Heart left ventricle (tissue), 16 donors: ENCODE measurements at regions of chr18 and their contacts with region 1.

Region 1: DNA sequence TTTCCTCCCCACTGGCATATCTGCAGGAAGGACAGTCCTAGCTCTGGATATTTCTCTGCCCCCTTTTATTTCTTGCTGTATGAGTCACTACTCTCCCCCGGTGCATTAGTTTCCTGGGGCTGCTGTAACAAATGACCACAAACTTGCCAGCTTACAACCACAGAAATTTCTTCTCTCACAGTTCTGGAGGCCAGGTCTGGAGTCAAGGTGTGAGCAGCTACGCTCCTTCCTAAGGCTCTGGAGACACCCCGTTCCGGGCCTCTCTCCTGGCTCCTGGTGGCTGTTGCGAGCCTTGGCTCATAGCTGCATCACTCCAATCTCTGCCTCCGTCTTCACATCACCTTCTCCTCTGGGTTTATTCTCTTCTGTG is 34.1 kb downstream of the PTPRM start:
- DNase-seq: no peak
- ATAC-seq: peak in 3 of 4 donors; percentile 17 to 49 (median 32)
- H3K4me3 ChIP-seq: no peak overlapping the region
- H3K27ac ChIP-seq: peak overlapping the region in 5 of 12 donors; percentile 6 to 51 (median 10)
- H3K4me1 ChIP-seq: peaks cover 0 to 95% (median 59%) of the 10 kb centered on the region in 12 donors
- H3K27me3 ChIP-seq: no peaks in the 10 kb centered on the region
- CTCF ChIP-seq: peak in 3 of 12 donors; percentile 14 to 23 (median 19)
- POLR2A ChIP-seq: no peak

Region 2: GRCh38 chr18:7545734-7546133 is 55.5 kb before region 1 on chr18:
- intact Hi-C with region 1: no loop called
- DNase-seq: no peak
- ATAC-seq: peak in 1 of 4 donors; percentile 31
- H3K4me3 ChIP-seq: no peak overlapping the region
- H3K27ac ChIP-seq: no peak overlapping the region
- H3K4me1 ChIP-seq: peaks cover 0 to 3% (median 0%) of the 10 kb centered on the region in 12 donors
- H3K27me3 ChIP-seq: no peaks in the 10 kb centered on the region
- CTCF ChIP-seq: no peak
- POLR2A ChIP-seq: no peak

Region 3: GRCh38 chr18:7645756-7646155 is 44.5 kb after region 1 on chr18:
- intact Hi-C with region 1: no loop called
- DNase-seq: no peak
- ATAC-seq: peak in 2 of 4 donors; percentile 28 to 49
- H3K4me3 ChIP-seq: no peak overlapping the region
- H3K27ac ChIP-seq: no peak overlapping the region
- H3K4me1 ChIP-seq: peaks cover 0 to 72% (median 42%) of the 10 kb centered on the region in 12 donors
- H3K27me3 ChIP-seq: no peaks in the 10 kb centered on the region
- CTCF ChIP-seq: no peak
- POLR2A ChIP-seq: no peak

Region 4: DNA sequence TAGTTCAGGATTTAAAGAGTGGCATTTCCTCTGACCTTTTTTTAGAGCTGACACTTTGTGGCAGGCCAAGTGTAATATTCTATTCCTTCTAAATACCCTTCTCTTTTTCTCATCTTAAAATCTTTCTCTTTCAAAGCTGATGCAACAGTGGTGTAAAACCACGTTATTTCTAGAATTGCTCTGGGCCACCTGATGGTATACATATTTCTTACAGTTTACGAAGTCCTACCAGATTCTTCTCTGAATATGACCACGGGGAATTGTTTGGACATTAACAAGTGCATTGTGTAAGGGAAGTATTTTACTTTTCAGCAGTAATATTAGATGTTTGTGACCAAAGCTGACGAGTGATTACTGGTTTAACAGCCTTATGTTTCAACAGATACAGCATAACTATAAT is 75.8 kb after region 1 on chr18:
- intact Hi-C with region 1: loop called in 2 of 10 experiments (anchors 5 to 10 kb)
- DNase-seq: no peak
- ATAC-seq: no peak
- H3K4me3 ChIP-seq: no peak overlapping the region
- H3K27ac ChIP-seq: peak overlapping the region in 7 of 12 donors; percentile 6 to 49 (median 20)
- H3K4me1 ChIP-seq: peaks cover 0 to 87% (median 54%) of the 10 kb centered on the region in 12 donors
- H3K27me3 ChIP-seq: no peaks in the 10 kb centered on the region
- CTCF ChIP-seq: no peak
- POLR2A ChIP-seq: no peak

Region 5: DNA sequence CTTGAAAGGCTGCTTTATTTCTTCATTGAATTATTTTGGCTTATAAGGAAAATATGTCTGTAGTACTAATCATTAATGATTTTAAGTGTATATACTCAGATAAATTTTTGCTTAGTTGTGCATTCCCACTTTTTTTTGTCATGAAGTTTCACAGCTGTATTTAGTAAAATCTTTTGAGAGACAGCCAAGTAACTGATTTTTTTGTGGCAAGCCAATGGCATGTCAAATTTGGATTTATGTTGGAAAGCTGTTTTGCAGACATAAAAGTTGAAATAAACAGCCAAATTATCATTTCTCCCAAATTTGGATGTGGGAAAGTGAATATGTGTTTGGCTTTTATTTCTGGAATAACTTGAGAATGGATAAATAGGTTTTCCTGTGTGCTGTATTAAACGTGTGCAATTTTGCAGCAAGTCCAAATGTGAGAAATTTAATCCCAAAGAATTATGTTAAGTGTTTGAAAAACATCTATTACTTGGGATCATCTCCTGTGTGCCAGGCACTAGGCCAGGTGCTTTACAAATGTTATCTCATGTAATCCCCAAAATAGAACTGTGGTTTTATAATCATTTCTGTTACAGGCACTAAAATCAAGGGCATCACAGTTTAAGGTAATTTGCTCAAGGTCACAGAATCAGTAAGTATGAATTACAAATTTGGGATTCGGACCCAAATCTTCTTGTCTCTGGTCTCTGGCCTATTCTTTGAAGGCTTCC is 126.3 kb after region 1 on chr18:
- intact Hi-C with region 1: loop called in 1 of 10 experiments (anchors 10 kb)
- DNase-seq: no peak
- ATAC-seq: no peak
- H3K4me3 ChIP-seq: no peak overlapping the region
- H3K27ac ChIP-seq: peak overlapping the region in 10 of 12 donors; percentile 3 to 57 (median 27)
- H3K4me1 ChIP-seq: peaks cover 0 to 52% (median 21%) of the 10 kb centered on the region in 12 donors
- H3K27me3 ChIP-seq: no peaks in the 10 kb centered on the region
- CTCF ChIP-seq: no peak
- POLR2A ChIP-seq: no peak

Region 6: GRCh38 chr18:7755753-7756475 is 154.7 kb after region 1 on chr18:
- intact Hi-C with region 1: loop called in 1 of 10 experiments (anchors 10 kb)
- DNase-seq: no peak
- ATAC-seq: peak; percentile 41 to 52 (median 48)
- H3K4me3 ChIP-seq: no peak overlapping the region
- H3K27ac ChIP-seq: peak overlapping the region in 3 of 12 donors; percentile 32 to 58 (median 42)
- H3K4me1 ChIP-seq: peaks cover 0 to 91% (median 41%) of the 10 kb centered on the region in 12 donors
- H3K27me3 ChIP-seq: no peaks in the 10 kb centered on the region
- CTCF ChIP-seq: peak in 11 of 12 donors; percentile 14 to 58 (median 37)
- POLR2A ChIP-seq: no peak